AG04449 (cell line): ENCODE measurements at regions of chr5 and their contacts with region 1.

Region 1: GRCh38 chr5:159304961-159305595 is 25.2 kb downstream of the IL12B start:
- DNase-seq: no peak
- H3K4me3 ChIP-seq: no peak overlapping the region
- CTCF ChIP-seq: no peak

Region 2: DNA sequence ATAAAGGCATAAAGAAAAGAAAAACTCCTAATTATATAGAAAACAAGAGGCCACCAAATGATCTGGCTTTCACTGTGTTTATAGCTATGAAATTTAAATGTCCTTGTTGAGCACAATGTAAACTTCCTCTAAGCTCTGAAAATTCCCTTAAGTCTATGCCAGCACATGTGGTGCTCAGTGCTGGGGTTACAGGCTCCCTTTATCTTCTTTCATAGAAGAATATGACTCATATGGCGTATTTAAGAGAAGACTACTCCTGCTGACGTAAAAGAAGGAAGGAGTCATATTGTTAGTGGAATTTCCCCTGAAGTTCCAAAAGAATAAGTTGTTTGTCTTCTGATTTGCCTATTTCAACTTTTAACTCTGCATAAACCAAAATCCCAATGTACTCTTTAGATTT is 126.1 kb before region 1 on chr5:
- CTCF ChIA-PET with region 1: no interaction called
- POLR2A ChIA-PET with region 1: no interaction called
- DNase-seq: peak; percentile 96
- H3K4me3 ChIP-seq: no peak overlapping the region
- CTCF ChIP-seq: no peak

Region 3: DNA sequence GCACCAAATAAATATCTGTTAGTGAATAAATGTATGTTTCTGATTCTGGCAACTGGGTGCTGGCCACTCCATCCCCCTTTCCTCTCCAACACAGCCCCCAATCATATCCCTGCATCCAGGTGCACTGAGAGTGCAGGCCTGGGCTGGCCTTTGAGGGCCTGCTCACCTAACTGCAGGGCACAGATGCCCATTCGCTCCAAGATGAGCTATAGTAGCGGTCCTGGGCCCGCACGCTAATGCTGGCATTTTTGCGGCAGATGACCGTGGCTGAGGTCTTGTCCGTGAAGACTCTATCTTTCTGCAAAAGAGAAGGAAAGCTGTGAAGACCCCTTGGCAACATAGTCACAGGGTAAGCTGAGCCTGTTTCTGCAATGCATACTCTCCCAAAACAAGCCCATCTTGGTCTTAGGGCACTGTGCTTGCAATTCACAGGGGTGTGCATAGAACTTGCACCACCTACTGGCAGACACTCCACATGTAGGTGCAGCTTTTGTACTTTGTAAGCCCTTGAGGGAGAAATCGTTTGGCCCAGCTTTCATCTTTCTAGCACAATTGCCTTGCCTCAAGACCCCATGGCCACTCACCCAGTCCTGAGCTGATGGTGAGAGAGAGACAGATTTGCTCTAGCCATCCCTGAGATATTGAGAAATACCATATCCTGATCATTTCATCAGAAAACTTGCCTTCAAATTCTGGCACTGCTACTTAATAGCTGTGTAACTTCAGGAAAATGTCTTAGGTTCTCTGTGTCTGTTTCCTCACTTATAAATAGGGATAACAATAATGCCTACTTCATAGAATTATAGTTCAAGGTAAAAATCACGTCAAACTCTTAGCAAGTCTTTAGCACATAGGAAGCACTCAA is 11.7 kb after region 1 on chr5:
- CTCF ChIA-PET with region 1: interaction called, 16 read pairs
- POLR2A ChIA-PET with region 1: no interaction called
- DNase-seq: no peak
- H3K4me3 ChIP-seq: no peak overlapping the region
- CTCF ChIP-seq: peak; percentile 72

Region 4: DNA sequence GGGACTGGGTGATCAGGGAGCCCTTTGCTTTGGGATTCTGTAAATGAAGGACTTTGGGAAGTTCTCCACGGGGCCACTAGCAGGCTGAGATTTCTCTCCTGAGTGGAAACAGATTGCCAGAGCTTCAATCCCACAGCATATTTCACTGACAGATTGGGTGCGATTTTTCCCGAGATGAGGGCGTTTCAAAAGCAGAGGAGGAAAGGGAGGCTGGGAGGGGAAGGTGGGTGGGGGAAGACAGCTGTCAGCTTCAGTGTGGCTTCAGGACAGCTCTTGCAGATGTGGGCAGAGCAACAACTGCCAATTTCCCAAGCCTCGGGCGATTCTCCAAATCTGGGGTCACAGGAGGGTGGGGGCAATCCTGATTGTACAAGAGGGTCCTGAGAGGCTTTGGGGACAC is 352.7 kb after region 1 on chr5:
- CTCF ChIA-PET with region 1: no interaction called
- POLR2A ChIA-PET with region 1: no interaction called
- DNase-seq: no peak
- H3K4me3 ChIP-seq: no peak overlapping the region
- CTCF ChIP-seq: no peak